MCF 10A (cell line): ENCODE measurements at regions of chr6 and their contacts with region 1.

Region 1: GRCh38 chr6:123802697-123803496 is 768 bp upstream of the NKAIN2 start:
- DNase-seq: peak; percentile 88
- H3K4me3 Mint-ChIP-seq: peak overlapping the region; percentile 83
- H3K27ac Mint-ChIP-seq: no peak overlapping the region
- H3K4me1 Mint-ChIP-seq: peaks cover 21% of the 10 kb centered on the region
- H3K27me3 Mint-ChIP-seq: no peaks in the 10 kb centered on the region
- CTCF ChIP-seq: peak; percentile 85

Region 2: GRCh38 chr6:123777563-123777962 is 25.3 kb before region 1 on chr6:
- CTCF ChIA-PET with region 1: interaction called, 27 read pairs
- POLR2A ChIA-PET with region 1: no interaction called
- intact Hi-C with region 1: loop called (anchors 1 kb)
- DNase-seq: peak; percentile 54
- H3K4me3 Mint-ChIP-seq: no peak overlapping the region
- H3K27ac Mint-ChIP-seq: no peak overlapping the region
- H3K4me1 Mint-ChIP-seq: no peaks in the 10 kb centered on the region
- H3K27me3 Mint-ChIP-seq: peaks cover 9% of the 10 kb centered on the region
- CTCF ChIP-seq: peak; percentile 55

Region 3: DNA sequence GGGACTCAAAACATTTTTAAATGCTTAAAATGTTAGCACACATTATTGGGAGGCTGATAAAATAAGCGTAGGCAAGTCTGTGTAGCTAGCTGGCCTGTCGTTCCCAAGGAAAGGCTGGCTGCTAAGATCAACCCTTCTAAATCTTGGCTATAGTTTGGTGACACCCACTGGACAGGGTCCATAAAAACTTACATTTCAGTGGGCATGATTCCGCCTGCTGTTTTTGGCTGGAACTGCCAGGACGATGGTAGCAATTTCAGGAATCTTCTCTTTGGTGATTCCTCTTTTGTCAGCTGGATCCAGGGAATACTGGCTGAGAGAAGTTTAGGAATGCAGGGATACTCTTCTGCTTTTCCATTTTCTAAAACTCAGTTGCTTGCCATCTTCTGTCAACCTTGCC is 163.0 kb after region 1 on chr6:
- CTCF ChIA-PET with region 1: interaction called, 12 read pairs
- POLR2A ChIA-PET with region 1: no interaction called
- intact Hi-C with region 1: loop called (anchors 1 kb)
- DNase-seq: peak; percentile 48
- H3K4me3 Mint-ChIP-seq: no peak overlapping the region
- H3K27ac Mint-ChIP-seq: no peak overlapping the region
- H3K4me1 Mint-ChIP-seq: peaks cover 6% of the 10 kb centered on the region
- H3K27me3 Mint-ChIP-seq: no peaks in the 10 kb centered on the region
- CTCF ChIP-seq: peak; percentile 27

Region 4: GRCh38 chr6:124389127-124389526 is 586.2 kb after region 1 on chr6:
- CTCF ChIA-PET with region 1: interaction called, 4 read pairs
- POLR2A ChIA-PET with region 1: no interaction called
- intact Hi-C with region 1: loop called (anchors 5 kb)
- DNase-seq: peak; percentile 9
- H3K4me3 Mint-ChIP-seq: no peak overlapping the region
- H3K27ac Mint-ChIP-seq: no peak overlapping the region
- H3K4me1 Mint-ChIP-seq: no peaks in the 10 kb centered on the region
- H3K27me3 Mint-ChIP-seq: no peaks in the 10 kb centered on the region
- CTCF ChIP-seq: no peak

Region 5: DNA sequence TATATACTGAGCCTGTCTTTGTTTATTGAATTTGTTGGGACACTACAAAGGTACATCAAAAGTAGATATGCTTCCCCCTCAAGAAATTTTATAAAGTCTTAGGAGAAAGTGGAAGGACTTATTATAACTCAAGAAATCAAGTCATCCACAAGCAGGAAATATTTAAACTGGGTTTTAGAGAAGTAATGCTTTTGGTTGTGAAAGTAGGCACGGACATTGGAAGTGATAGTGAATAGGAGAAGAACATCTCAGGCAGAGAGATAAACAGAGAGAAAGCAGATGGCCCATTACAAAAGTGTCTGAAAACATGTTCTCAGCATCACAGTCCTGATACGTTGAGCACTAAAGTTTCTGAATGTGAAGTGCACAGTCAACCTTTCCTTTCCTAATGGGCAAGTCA is 743.7 kb after region 1 on chr6:
- CTCF ChIA-PET with region 1: no interaction called
- POLR2A ChIA-PET with region 1: no interaction called
- intact Hi-C with region 1: loop called (anchors 10 kb)
- DNase-seq: no peak
- H3K4me3 Mint-ChIP-seq: no peak overlapping the region
- H3K27ac Mint-ChIP-seq: no peak overlapping the region
- H3K4me1 Mint-ChIP-seq: no peaks in the 10 kb centered on the region
- H3K27me3 Mint-ChIP-seq: no peaks in the 10 kb centered on the region
- CTCF ChIP-seq: no peak

Region 6: GRCh38 chr6:124854338-124854922 is 1051.5 kb after region 1 on chr6:
- CTCF ChIA-PET with region 1: interaction called, 5 read pairs
- POLR2A ChIA-PET with region 1: no interaction called
- intact Hi-C with region 1: loop called (anchors 1 kb)
- DNase-seq: peak; percentile 11
- H3K4me3 Mint-ChIP-seq: no peak overlapping the region
- H3K27ac Mint-ChIP-seq: no peak overlapping the region
- H3K4me1 Mint-ChIP-seq: no peaks in the 10 kb centered on the region
- H3K27me3 Mint-ChIP-seq: no peaks in the 10 kb centered on the region
- CTCF ChIP-seq: peak; percentile 38